Activated T-helper 2 cell treated with anti-CD3 and anti-CD28 coated beads, Interferon-gamma antibody, Interleukin-2, Interleukin-4, amounts not matched to agents 10 μg/mL and 5 μg/mL and 100 μg/mL, durations not matched to agents 14 hours and 24 hours and 36 hours (primary cell): ENCODE measurements at regions of chr1 and their contacts with region 1.

Region 1: GRCh38 chr1:60848583-60849188 is 233.7 kb upstream of the NFIA start:
- DNase-seq: no peak
- H3K4me3 Mint-ChIP-seq: no peak overlapping the region
- H3K27ac Mint-ChIP-seq: no peak overlapping the region
- H3K4me1 Mint-ChIP-seq: no peaks in the 10 kb centered on the region
- H3K27me3 Mint-ChIP-seq: peaks cover 15% of the 10 kb centered on the region

Region 2: DNA sequence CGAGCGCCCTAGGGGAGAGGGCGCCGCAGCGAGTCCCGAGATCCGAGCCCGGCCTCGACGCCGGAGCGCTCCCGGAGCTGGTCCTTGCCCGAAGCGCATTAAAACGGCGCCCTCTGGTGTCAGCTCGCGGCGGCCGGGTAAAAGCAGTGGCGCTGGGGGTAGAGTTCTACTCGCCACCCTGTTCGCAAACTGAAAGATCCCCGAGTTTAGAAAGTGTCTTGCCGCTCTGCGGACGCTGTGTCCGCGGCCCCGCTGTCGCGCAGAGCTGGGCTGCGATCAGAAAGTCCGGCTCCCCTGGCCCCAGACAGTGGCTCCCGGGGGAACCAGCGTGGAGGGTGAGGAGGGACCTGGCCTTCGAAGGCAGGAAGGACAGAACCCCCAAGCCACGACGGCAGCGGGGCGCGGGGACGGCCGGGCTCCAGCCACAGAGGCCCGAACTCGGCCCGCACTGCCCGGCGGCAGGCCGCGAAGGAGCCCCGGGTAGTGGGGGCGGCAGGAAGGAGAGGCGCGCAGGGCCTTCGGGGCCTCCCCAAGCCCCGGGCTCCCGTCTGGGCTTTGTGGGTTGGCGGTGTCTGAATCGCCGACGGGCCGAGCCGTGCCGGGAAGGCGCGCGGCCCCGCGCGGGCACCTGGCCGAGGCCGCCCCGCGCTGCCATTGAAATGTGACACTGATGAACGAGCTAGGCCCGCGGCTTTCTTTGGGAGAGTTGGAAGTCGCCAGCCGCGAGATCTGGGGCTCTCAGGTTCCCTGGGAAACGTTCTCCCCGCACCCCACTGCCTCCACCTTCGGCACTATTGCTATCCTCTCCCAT is 194.5 kb after region 1 on chr1:
- intact Hi-C with region 1: loop called (anchors 2 kb)
- DNase-seq: peak; percentile 69
- H3K4me3 Mint-ChIP-seq: no peak overlapping the region
- H3K27ac Mint-ChIP-seq: no peak overlapping the region
- H3K4me1 Mint-ChIP-seq: no peaks in the 10 kb centered on the region
- H3K27me3 Mint-ChIP-seq: peaks cover 56% of the 10 kb centered on the region